ENCODE measurements at regions of chr17 and their contacts with region 1.

Region 1: DNA sequence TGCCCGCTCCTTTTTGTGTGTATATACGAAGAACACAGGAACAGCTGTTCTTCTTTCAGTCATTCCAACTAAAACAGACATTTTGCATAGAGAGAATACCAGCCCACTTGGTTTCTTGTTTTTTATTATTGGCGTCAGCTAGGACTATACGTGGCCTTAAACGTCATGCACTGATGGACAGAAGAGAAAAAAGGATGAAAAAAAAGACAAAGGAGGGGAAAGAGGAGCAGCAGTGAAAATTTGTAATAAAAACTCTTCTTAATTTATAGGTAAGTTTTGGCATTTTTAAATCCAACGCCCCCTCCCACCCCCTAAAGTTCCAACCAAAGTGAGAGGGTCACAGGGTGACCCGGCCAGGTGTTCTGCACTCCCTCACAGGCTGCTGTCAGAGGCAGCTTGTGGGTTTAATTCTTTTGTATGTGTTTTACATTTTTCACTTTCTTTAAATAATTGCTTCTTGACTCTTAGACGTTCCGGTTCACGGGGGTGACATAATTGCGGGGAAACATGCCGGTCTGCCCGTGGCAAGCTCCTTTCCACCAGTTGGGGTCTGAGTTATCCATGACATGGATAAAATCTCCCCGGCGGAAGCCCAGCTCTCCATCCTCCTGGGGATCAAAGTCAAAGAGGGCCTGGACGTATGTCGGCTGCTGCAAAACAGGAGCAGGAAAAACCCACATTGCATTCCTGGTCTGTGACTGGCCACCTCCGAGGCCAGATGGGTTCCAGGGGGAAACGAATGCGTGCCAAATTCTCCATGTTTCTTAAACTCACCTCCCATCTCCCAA is 30.9 kb upstream of the SLC25A19 start:
- DNase-seq: no peak
- ATAC-seq: no peak
- H3K4me3 Mint-ChIP-seq: no peak overlapping the region
- H3K27ac Mint-ChIP-seq: no peak overlapping the region
- H3K4me1 Mint-ChIP-seq: peaks cover 26% of the 10 kb centered on the region
- H3K27me3 Mint-ChIP-seq: no peaks in the 10 kb centered on the region

Region 2: GRCh38 chr17:75289115-75289831 is 30.8 kb before region 1 on chr17 and contains the start of gene SLC25A19:
- CTCF ChIA-PET with region 1: interaction called, 22 read pairs
- DNase-seq: peak; percentile 100
- ATAC-seq: peak; percentile 92
- H3K4me3 Mint-ChIP-seq: peak within 1 kb of the TSS; percentile 97
- H3K27ac Mint-ChIP-seq: peak within 1 kb of the TSS; percentile 100
- H3K4me1 Mint-ChIP-seq: peaks cover 24% of the 10 kb centered on the region
- H3K27me3 Mint-ChIP-seq: no peaks in the 10 kb centered on the region
- total RNA-seq, gene SLC25A19: 46.3 to 66.4 TPM

Region 3: GRCh38 chr17:75338335-75338734 is 18.2 kb after region 1 on chr17:
- CTCF ChIA-PET with region 1: interaction called, 38 read pairs
- DNase-seq: no peak
- ATAC-seq: peak; percentile 65
- H3K4me3 Mint-ChIP-seq: peak overlapping the region; percentile 68
- H3K27ac Mint-ChIP-seq: peak overlapping the region; percentile 81
- H3K4me1 Mint-ChIP-seq: peaks cover 70% of the 10 kb centered on the region
- H3K27me3 Mint-ChIP-seq: no peaks in the 10 kb centered on the region

Region 4: GRCh38 chr17:75350706-75351105 is 30.6 kb after region 1 on chr17:
- CTCF ChIA-PET with region 1: interaction called, 12 read pairs
- DNase-seq: no peak
- ATAC-seq: no peak
- H3K4me3 Mint-ChIP-seq: no peak overlapping the region
- H3K27ac Mint-ChIP-seq: no peak overlapping the region
- H3K4me1 Mint-ChIP-seq: peaks cover 48% of the 10 kb centered on the region
- H3K27me3 Mint-ChIP-seq: no peaks in the 10 kb centered on the region

Region 5: GRCh38 chr17:75361996-75362395 is 41.9 kb after region 1 on chr17:
- CTCF ChIA-PET with region 1: no interaction called
- DNase-seq: no peak
- ATAC-seq: no peak
- H3K4me3 Mint-ChIP-seq: no peak overlapping the region
- H3K27ac Mint-ChIP-seq: no peak overlapping the region
- H3K4me1 Mint-ChIP-seq: peaks cover 73% of the 10 kb centered on the region
- H3K27me3 Mint-ChIP-seq: no peaks in the 10 kb centered on the region

Region 6: GRCh38 chr17:75393523-75394331 is 73.6 kb after region 1 on chr17:
- CTCF ChIA-PET with region 1: interaction called, 43 read pairs
- DNase-seq: peak; percentile 91
- ATAC-seq: peak; percentile 96
- H3K4me3 Mint-ChIP-seq: peak overlapping the region; percentile 98
- H3K27ac Mint-ChIP-seq: peak overlapping the region; percentile 67
- H3K4me1 Mint-ChIP-seq: peaks cover 68% of the 10 kb centered on the region
- H3K27me3 Mint-ChIP-seq: no peaks in the 10 kb centered on the region

Region 7: GRCh38 chr17:75405365-75406221 is 85.5 kb after region 1 on chr17 and contains the start of gene GRB2:
- CTCF ChIA-PET with region 1: interaction called, 45 read pairs
- DNase-seq: peak; percentile 100
- ATAC-seq: peak; percentile 89
- H3K4me3 Mint-ChIP-seq: peak within 1 kb of the TSS; percentile 90
- H3K27ac Mint-ChIP-seq: peak within 1 kb of the TSS; percentile 91
- H3K4me1 Mint-ChIP-seq: peaks cover 45% of the 10 kb centered on the region
- H3K27me3 Mint-ChIP-seq: no peaks in the 10 kb centered on the region
- total RNA-seq, gene GRB2: 138 to 179 TPM